Activated B cell treated with CpG ODN at 0.5 μM for 24 hours (primary cell): ENCODE measurements at regions of chr3 and their contacts with region 1.

Region 1: GRCh38 chr3:177320765-177321247 is 123.5 kb upstream of the TBL1XR1 start:
- DNase-seq: no peak
- ATAC-seq: peak; percentile 22
- H3K4me3 Mint-ChIP-seq: peak overlapping the region; percentile 57
- H3K27ac Mint-ChIP-seq: peak overlapping the region; percentile 77
- H3K4me1 Mint-ChIP-seq: peaks cover 87% of the 10 kb centered on the region
- H3K27me3 Mint-ChIP-seq: no peaks in the 10 kb centered on the region
- CTCF ChIP-seq: no peak

Region 2: GRCh38 chr3:176867681-176868663 is 452.8 kb before region 1 on chr3:
- CTCF ChIA-PET with region 1: no interaction called
- POLR2A ChIA-PET with region 1: no interaction called
- intact Hi-C with region 1: no loop called
- DNase-seq: no peak
- ATAC-seq: no peak
- H3K4me3 Mint-ChIP-seq: no peak overlapping the region
- H3K27ac Mint-ChIP-seq: no peak overlapping the region
- H3K4me1 Mint-ChIP-seq: peaks cover 2% of the 10 kb centered on the region
- H3K27me3 Mint-ChIP-seq: no peaks in the 10 kb centered on the region
- CTCF ChIP-seq: no peak

Region 3: GRCh38 chr3:177251755-177252154 is 69.1 kb before region 1 on chr3:
- CTCF ChIA-PET with region 1: no interaction called
- POLR2A ChIA-PET with region 1: interaction called, 7 read pairs
- intact Hi-C with region 1: loop called (anchors 1 kb)
- DNase-seq: no peak
- ATAC-seq: peak; percentile 64
- H3K4me3 Mint-ChIP-seq: no peak overlapping the region
- H3K27ac Mint-ChIP-seq: peak overlapping the region; percentile 79
- H3K4me1 Mint-ChIP-seq: peaks cover 36% of the 10 kb centered on the region
- H3K27me3 Mint-ChIP-seq: no peaks in the 10 kb centered on the region
- CTCF ChIP-seq: no peak

Region 4: DNA sequence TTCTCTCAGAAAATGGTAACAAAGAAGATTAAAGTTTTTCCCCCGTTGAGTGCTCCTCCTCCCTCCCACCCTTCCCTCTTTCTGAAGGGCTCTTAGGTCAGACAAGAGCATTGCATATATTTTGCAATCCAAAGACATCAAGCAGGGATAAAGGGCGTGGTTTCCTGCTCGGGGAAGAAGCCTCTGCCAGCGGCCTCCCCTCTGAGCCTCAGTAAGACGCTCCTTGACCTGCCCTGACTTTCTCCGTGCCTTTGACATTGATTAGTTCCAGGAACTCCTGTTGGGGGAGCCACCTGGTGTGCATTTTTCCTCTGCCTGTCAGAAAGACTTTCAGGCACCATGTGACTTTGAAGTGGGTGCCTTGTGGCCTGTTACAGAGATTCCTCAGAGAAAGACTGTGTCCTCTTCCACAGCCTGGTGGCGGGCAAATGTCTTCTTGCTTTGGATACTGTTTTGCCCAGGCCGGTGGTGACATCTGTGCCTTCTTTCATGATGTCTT is 36.4 kb before region 1 on chr3:
- CTCF ChIA-PET with region 1: no interaction called
- POLR2A ChIA-PET with region 1: interaction called, 6 read pairs
- intact Hi-C with region 1: loop called (anchors 2 kb)
- DNase-seq: no peak
- ATAC-seq: no peak
- H3K4me3 Mint-ChIP-seq: no peak overlapping the region
- H3K27ac Mint-ChIP-seq: no peak overlapping the region
- H3K4me1 Mint-ChIP-seq: peaks cover 23% of the 10 kb centered on the region
- H3K27me3 Mint-ChIP-seq: no peaks in the 10 kb centered on the region
- CTCF ChIP-seq: no peak

Region 5: DNA sequence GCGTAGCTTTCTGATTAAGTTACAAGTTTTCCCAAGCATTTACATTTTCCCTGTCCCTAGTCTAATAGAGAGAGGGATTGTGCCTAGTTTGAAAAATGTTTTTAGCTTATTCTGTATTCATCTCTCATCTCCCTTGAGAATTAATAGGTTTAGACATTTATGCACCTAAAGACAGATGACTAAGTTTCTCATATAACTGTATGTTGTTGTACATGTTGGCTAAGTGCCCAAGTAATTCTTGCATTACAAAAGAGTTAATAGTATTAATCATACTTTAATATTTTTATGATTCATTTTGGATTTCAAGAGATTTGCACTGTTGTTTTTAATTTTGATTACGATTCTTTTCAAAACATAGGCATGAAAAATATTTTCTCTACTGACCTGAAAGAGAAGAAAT is 14.6 kb before region 1 on chr3:
- CTCF ChIA-PET with region 1: no interaction called
- POLR2A ChIA-PET with region 1: no interaction called
- intact Hi-C with region 1: loop called (anchors 2 kb)
- DNase-seq: no peak
- ATAC-seq: no peak
- H3K4me3 Mint-ChIP-seq: no peak overlapping the region
- H3K27ac Mint-ChIP-seq: no peak overlapping the region
- H3K4me1 Mint-ChIP-seq: peaks cover 7% of the 10 kb centered on the region
- H3K27me3 Mint-ChIP-seq: no peaks in the 10 kb centered on the region
- CTCF ChIP-seq: no peak

Region 6: GRCh38 chr3:177337541-177338331 is 16.9 kb after region 1 on chr3:
- CTCF ChIA-PET with region 1: interaction called, 3 read pairs
- POLR2A ChIA-PET with region 1: interaction called, 60 read pairs
- intact Hi-C with region 1: loop called (anchors 1 kb)
- DNase-seq: no peak
- ATAC-seq: peak; percentile 82
- H3K4me3 Mint-ChIP-seq: peak overlapping the region; percentile 67
- H3K27ac Mint-ChIP-seq: peak overlapping the region; percentile 98
- H3K4me1 Mint-ChIP-seq: peaks cover 61% of the 10 kb centered on the region
- H3K27me3 Mint-ChIP-seq: no peaks in the 10 kb centered on the region
- CTCF ChIP-seq: no peak

Region 7: GRCh38 chr3:177351206-177352158 is 30.7 kb after region 1 on chr3:
- CTCF ChIA-PET with region 1: interaction called, 3 read pairs
- POLR2A ChIA-PET with region 1: interaction called, 7 read pairs
- intact Hi-C with region 1: loop called (anchors 1 kb)
- DNase-seq: no peak
- ATAC-seq: peak; percentile 85
- H3K4me3 Mint-ChIP-seq: peak overlapping the region; percentile 74
- H3K27ac Mint-ChIP-seq: peak overlapping the region; percentile 95
- H3K4me1 Mint-ChIP-seq: peaks cover 82% of the 10 kb centered on the region
- H3K27me3 Mint-ChIP-seq: no peaks in the 10 kb centered on the region
- CTCF ChIP-seq: no peak